OCI-LY7 (cell line): ENCODE measurements at regions of chr1 and their contacts with region 1.

Region 1: DNA sequence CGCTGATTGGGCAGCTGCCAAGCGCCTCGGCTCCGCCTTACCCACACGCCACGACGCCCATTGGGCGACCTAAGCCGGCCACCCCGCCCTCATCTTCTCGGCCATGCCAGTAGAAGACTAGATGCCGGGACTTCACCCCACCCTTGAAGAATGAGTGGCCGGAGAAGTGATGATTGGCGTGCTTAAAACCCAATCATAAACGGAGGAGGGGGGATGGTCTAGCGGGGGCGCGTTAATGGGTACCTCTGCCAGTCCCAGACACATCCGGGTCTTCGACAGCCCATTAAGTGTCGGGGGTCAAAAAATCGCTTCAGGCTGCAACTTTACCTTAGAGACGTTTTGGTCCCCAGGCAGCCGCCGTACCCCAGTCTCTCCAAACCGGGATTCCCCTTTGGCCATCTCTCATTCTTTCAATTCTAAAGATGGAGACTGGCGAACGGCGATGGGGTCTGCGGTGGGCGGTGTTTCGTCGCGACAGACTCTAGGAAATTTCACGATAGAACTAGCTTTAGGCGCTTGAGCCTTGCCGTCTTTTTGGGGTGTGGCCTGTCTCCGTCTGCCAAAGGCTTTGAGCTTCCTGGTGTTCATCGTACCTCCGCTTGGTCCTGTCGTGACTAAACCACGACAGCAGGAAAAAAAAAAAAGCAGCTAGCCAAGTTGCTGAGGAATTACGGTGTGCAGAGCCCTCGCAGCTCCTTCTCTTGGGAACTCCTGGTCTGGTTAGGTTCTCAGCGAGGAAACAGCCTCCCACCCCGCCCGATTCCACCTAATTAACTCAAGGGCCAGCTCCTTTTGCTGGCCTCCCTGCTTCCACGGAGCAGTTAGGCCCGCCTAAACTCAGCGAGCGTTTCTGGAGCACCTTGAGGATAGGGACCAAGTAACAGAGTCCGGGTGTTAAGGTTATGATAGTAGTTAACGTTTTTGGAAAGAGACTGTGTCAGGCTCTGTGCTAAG is at the start of gene GATAD2B:
- DNase-seq: peak; percentile 100
- H3K4me3 ChIP-seq: peak within 1 kb of the TSS; percentile 97
- H3K27ac ChIP-seq: peak within 1 kb of the TSS; percentile 90
- H3K4me1 ChIP-seq: peaks cover 28% of the 10 kb centered on the region
- CTCF ChIP-seq: no peak
- total RNA-seq, gene GATAD2B: 7.7 and 11.2 TPM in 2 replicates

Region 2: GRCh38 chr1:152901631-152902030 is 1021.6 kb before region 1 on chr1:
- CTCF ChIA-PET with region 1: no interaction called
- POLR2A ChIA-PET with region 1: no interaction called
- intact Hi-C with region 1: no loop called
- DNase-seq: no peak
- H3K4me3 ChIP-seq: no peak overlapping the region
- H3K27ac ChIP-seq: no peak overlapping the region
- H3K4me1 ChIP-seq: no peaks in the 10 kb centered on the region
- CTCF ChIP-seq: no peak

Region 3: GRCh38 chr1:153805042-153805745 is 118.1 kb before region 1 on chr1:
- CTCF ChIA-PET with region 1: no interaction called
- POLR2A ChIA-PET with region 1: interaction called, 3 read pairs
- intact Hi-C with region 1: loop called (anchors 2 kb)
- DNase-seq: peak; percentile 90
- H3K4me3 ChIP-seq: peak overlapping the region; percentile 11
- H3K27ac ChIP-seq: peak overlapping the region; percentile 86
- H3K4me1 ChIP-seq: peaks cover 37% of the 10 kb centered on the region
- CTCF ChIP-seq: no peak

Region 4: DNA sequence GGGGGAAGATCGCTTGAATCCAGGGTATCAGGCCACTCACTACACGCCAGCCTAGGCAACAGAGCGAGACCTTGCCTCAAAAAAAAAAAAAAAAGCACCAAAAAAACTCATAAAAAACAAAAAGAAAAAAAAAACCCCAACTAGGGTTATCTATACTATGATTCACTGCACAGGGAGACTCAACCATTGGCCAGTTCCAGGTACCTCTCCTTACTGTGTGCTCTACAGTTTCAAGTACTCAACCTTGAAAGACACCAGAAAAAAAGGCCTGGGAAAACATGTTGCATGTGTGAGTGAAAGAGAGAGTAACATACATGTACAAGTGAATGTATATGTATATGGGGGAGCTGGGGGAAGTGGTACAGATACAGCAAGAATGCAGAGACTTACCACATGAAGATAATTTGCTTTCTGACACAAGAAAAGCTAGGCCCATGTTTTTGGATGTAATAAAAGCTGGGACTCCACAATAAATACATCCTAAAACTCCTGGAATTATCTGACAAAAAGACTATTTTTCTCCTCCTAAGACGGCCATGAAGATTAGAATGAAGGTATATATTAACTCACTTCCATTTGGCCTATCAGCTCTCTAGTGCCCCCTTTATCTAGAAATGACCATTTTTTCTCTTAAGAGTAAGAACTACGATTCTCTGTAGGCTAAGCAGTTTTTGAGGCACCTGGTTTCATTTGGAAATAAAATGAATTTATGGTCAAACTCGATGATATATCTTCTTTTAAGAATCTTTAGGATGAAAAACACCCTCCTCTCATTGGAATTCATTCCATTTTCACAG is 95.9 kb before region 1 on chr1:
- CTCF ChIA-PET with region 1: no interaction called
- POLR2A ChIA-PET with region 1: interaction called, 13 read pairs
- intact Hi-C with region 1: no loop called
- DNase-seq: no peak
- H3K4me3 ChIP-seq: no peak overlapping the region
- H3K27ac ChIP-seq: no peak overlapping the region
- H3K4me1 ChIP-seq: peaks cover 15% of the 10 kb centered on the region
- CTCF ChIP-seq: peak; percentile 72

Region 5: GRCh38 chr1:153946622-153947241 is 23.5 kb after region 1 on chr1 and contains the start of gene DENND4B:
- CTCF ChIA-PET with region 1: interaction called, 4 read pairs
- POLR2A ChIA-PET with region 1: interaction called, 32 read pairs
- intact Hi-C with region 1: loop called (anchors 1 kb)
- DNase-seq: peak; percentile 90
- H3K4me3 ChIP-seq: peak within 1 kb of the TSS; percentile 86
- H3K27ac ChIP-seq: peak within 1 kb of the TSS; percentile 92
- H3K4me1 ChIP-seq: peaks cover 35% of the 10 kb centered on the region
- CTCF ChIP-seq: peak; percentile 87
- total RNA-seq, gene DENND4B: 41.8 and 50.5 TPM in 2 replicates

Region 6: DNA sequence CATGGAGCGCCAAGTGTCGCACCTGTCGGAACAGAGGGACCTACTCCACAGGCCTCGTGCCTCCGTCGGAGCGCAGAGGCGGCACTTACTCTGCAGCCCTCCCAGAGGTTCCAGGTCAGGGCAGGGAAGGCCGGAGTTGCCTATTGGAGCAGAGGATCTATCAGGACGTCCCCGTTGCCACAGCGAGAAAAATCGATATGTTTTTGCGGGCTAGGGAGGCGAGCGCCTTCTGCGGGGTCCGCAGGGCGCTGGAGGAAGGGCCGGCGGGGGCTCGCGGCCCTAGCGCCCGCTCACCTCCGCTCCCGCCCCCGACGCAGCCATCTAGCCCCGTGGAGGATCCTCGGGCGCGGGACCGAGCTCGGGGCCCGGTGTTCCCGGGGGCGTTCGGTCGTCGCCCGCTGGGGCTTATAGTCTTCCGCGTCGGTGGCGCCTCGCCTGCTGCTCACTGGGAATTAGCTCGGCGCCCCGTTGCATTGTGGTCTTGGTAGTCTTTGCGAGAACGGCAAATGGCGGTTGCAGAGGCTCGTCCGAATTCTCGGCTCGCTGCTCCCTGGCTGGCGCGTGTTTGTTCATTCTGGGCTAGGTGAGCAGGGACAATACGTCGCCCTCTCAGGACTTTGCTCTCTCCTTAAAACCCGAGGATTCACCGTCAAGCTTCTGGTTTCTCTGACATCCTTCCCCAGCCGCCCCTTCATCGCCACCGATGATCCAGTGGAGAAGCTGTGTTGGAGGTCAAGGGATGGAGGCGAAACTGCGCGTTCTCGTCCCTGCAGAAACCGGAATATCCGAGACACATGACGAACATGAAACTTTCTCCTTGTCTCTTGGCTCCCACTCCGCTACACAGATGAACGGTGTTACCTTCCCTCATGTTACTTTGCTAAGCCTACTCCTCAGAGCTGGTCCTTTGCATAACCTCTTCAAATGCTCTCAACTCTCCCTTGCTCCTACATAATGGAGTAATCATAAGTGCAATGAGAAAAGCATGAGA is 54.3 kb after region 1 on chr1 and contains the start of gene JTB:
- CTCF ChIA-PET with region 1: interaction called, 4 read pairs
- POLR2A ChIA-PET with region 1: interaction called, 10 read pairs
- intact Hi-C with region 1: loop called (anchors 2 kb)
- DNase-seq: peak; percentile 88
- H3K4me3 ChIP-seq: peak within 1 kb of the TSS; percentile 86
- H3K27ac ChIP-seq: peak within 1 kb of the TSS; percentile 58
- H3K4me1 ChIP-seq: peaks cover 22% of the 10 kb centered on the region
- CTCF ChIP-seq: no peak
- total RNA-seq, gene JTB: 169 and 178 TPM in 2 replicates

Region 7: GRCh38 chr1:154117642-154118041 is 194.4 kb after region 1 on chr1:
- CTCF ChIA-PET with region 1: no interaction called
- POLR2A ChIA-PET with region 1: no interaction called
- intact Hi-C with region 1: no loop called
- DNase-seq: no peak
- H3K4me3 ChIP-seq: no peak overlapping the region
- H3K27ac ChIP-seq: no peak overlapping the region
- H3K4me1 ChIP-seq: no peaks in the 10 kb centered on the region
- CTCF ChIP-seq: peak; percentile 46; the same call in 1 of the 2 replicates